IMR-90 (cell line): ENCODE measurements at regions of chr1 and their contacts with region 1.

Region 1: GRCh38 chr1:2213576-2214505 is 14.3 kb upstream of the SKI start:
- DNase-seq: peak; percentile 86
- ATAC-seq: peak; percentile 62
- H3K4me3 ChIP-seq: no peak overlapping the region
- H3K27ac ChIP-seq: peak overlapping the region; percentile 99
- H3K4me1 ChIP-seq: peaks cover 33% of the 10 kb centered on the region
- H3K27me3 ChIP-seq: no peaks in the 10 kb centered on the region
- CTCF ChIP-seq: no peak
- POLR2A ChIP-seq: no peak
- RAD21 ChIP-seq: 0 out of 2 replicates have a peak, but pooled peaks have one; percentile 18

Region 2: DNA sequence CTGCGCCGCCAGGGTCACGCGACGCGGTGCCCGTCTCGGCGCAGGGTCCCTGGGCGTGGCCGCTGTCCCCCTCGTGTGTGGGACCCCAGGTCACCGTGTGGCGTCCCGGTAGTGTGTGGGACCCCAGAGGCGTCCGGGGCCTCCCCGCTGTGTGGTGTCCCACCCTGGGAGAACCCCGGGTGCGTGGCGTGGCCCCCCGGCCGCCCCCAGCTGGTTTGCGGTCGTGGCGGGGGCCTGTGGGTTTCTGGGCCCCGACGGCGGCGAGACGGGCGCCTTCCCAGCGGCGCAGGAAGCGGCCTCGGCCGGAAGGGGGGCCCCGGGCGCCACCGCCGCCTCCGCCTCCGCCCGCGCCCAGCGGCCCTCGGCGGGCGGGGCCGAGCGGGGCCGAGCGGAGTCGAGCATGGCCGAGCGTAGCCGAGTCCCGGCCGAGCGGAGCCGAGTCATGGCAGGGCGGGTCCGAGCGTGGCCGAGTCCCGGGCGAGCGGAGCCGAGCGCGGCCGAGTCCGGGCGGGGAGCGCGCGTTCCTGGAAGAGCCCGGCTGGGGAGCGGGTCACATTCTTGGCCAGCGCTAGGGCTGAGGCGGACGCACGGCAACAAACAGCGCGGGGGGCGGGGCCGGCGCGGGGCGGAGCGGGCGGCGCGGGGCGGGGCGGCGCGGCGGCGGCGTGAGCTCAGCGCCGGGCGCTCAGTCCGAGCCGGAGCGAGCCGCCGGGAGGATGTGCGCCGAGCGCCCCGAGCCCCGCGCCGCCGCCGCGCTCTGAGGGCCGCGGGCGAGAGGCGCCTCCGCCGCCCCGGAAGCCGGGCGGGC is 13.7 kb after region 1 on chr1:
- CTCF ChIA-PET with region 1: no interaction called
- POLR2A ChIA-PET with region 1: interaction called, 4 read pairs
- dilution Hi-C with region 1: no loop called
- in situ Hi-C with region 1: no loop called
- intact Hi-C with region 1: loop called (anchors 1 kb)
- DNase-seq: peak; percentile 95
- ATAC-seq: peak; percentile 93
- H3K4me3 ChIP-seq: peak overlapping the region; percentile 97
- H3K27ac ChIP-seq: peak overlapping the region; percentile 99
- H3K4me1 ChIP-seq: peaks cover 7% of the 10 kb centered on the region
- H3K27me3 ChIP-seq: no peaks in the 10 kb centered on the region
- CTCF ChIP-seq: no peak; the same call in 1 of the 2 replicates
- POLR2A ChIP-seq: peak; percentile 87
- RAD21 ChIP-seq: 0 out of 2 replicates have a peak, but pooled peaks have one; percentile 7

Region 3: GRCh38 chr1:2259668-2260402 is 46.0 kb after region 1 on chr1:
- CTCF ChIA-PET with region 1: no interaction called
- POLR2A ChIA-PET with region 1: no interaction called
- dilution Hi-C with region 1: no loop called
- in situ Hi-C with region 1: no loop called
- intact Hi-C with region 1: no loop called
- DNase-seq: no peak
- ATAC-seq: no peak
- H3K4me3 ChIP-seq: no peak overlapping the region
- H3K27ac ChIP-seq: no peak overlapping the region
- H3K4me1 ChIP-seq: peaks cover 10% of the 10 kb centered on the region; the same call in 1 of the 2 replicates
- H3K27me3 ChIP-seq: no peaks in the 10 kb centered on the region
- CTCF ChIP-seq: no peak
- POLR2A ChIP-seq: no peak
- RAD21 ChIP-seq: no peak

Region 4: GRCh38 chr1:2504225-2504948 is 290.5 kb after region 1 on chr1:
- CTCF ChIA-PET with region 1: no interaction called
- POLR2A ChIA-PET with region 1: no interaction called
- dilution Hi-C with region 1: no loop called
- in situ Hi-C with region 1: no loop called
- intact Hi-C with region 1: no loop called
- DNase-seq: no peak
- ATAC-seq: peak; percentile 18
- H3K4me3 ChIP-seq: no peak overlapping the region
- H3K27ac ChIP-seq: no peak overlapping the region
- H3K4me1 ChIP-seq: peaks cover 2% of the 10 kb centered on the region; the same call in 1 of the 2 replicates
- H3K27me3 ChIP-seq: peaks cover 12% of the 10 kb centered on the region; the same call in 1 of the 2 replicates
- CTCF ChIP-seq: no peak
- POLR2A ChIP-seq: no peak
- RAD21 ChIP-seq: no peak